ENCODE measurements at regions of chr9 and their contacts with region 1.

Region 1: GRCh38 chr9:96033896-96034295 is 158.4 kb downstream of the ERCC6L2 start:
- DNase-seq: no peak
- H3K4me3 ChIP-seq: no peak overlapping the region
- H3K27ac ChIP-seq: no peak overlapping the region
- H3K4me1 ChIP-seq: no peaks in the 10 kb centered on the region
- H3K27me3 ChIP-seq: no peaks in the 10 kb centered on the region
- CTCF ChIP-seq: no peak
- POLR2A ChIP-seq: no peak

Region 2: DNA sequence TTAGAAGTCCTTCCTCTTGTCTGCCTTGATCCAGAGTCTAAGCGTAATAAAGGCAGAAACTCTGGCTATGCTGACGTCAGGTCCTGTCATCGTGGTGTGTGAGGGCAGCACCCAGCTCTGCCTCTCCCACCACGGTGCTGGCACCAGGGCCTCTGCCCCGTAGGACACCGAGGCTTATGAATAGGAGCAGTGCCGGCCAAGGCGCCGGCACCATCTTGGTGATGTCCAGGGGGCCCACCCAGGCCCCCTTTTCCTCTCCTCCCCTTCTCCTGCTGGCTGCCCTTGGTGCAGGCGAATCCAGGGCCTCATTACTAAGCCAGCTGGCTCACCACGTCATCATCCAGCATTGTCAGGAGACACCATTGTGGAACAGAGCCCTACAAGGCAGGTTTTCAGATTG is 968.7 kb before region 1 on chr9:
- intact Hi-C with region 1: no loop called
- DNase-seq: peak in 1 of 2 donors; percentile 13
- H3K4me3 ChIP-seq: no peak overlapping the region
- H3K27ac ChIP-seq: peak overlapping the region in 1 of 2 donors; percentile 9
- H3K4me1 ChIP-seq: no peaks in the 10 kb centered on the region
- H3K27me3 ChIP-seq: no peaks in the 10 kb centered on the region
- CTCF ChIP-seq: no peak
- POLR2A ChIP-seq: no peak

Region 3: GRCh38 chr9:95822583-95823431 is 211.1 kb before region 1 on chr9:
- intact Hi-C with region 1: no loop called
- DNase-seq: no peak
- H3K4me3 ChIP-seq: no peak overlapping the region
- H3K27ac ChIP-seq: no peak overlapping the region
- H3K4me1 ChIP-seq: no peaks in the 10 kb centered on the region
- H3K27me3 ChIP-seq: no peaks in the 10 kb centered on the region
- CTCF ChIP-seq: no peak
- POLR2A ChIP-seq: no peak

Region 4: GRCh38 chr9:95985440-95986055 is 48.3 kb before region 1 on chr9:
- intact Hi-C with region 1: loop called (anchors 2 kb)
- DNase-seq: no peak
- H3K4me3 ChIP-seq: no peak overlapping the region
- H3K27ac ChIP-seq: no peak overlapping the region
- H3K4me1 ChIP-seq: no peaks in the 10 kb centered on the region
- H3K27me3 ChIP-seq: no peaks in the 10 kb centered on the region
- CTCF ChIP-seq: no peak
- POLR2A ChIP-seq: no peak

Region 5: GRCh38 chr9:96004379-96004778 is 29.5 kb before region 1 on chr9:
- intact Hi-C with region 1: no loop called
- DNase-seq: no peak
- H3K4me3 ChIP-seq: no peak overlapping the region
- H3K27ac ChIP-seq: no peak overlapping the region
- H3K4me1 ChIP-seq: no peaks in the 10 kb centered on the region
- H3K27me3 ChIP-seq: no peaks in the 10 kb centered on the region
- CTCF ChIP-seq: no peak
- POLR2A ChIP-seq: no peak

Region 6: GRCh38 chr9:96186591-96187011 is 152.7 kb after region 1 on chr9:
- intact Hi-C with region 1: no loop called
- DNase-seq: no peak
- H3K4me3 ChIP-seq: no peak overlapping the region
- H3K27ac ChIP-seq: no peak overlapping the region
- H3K4me1 ChIP-seq: no peaks in the 10 kb centered on the region
- H3K27me3 ChIP-seq: peaks cover 0 to 11% of the 10 kb centered on the region in 2 donors
- CTCF ChIP-seq: no peak
- POLR2A ChIP-seq: no peak

Measured in breast epithelium (tissue), 4 donors.